MCF 10A (cell line): ENCODE measurements at regions of chrX and their contacts with region 1.

Region 1: GRCh38 chrX:63686878-63687714 is 97.9 kb downstream of the ARHGEF9 start:
- DNase-seq: peak; percentile 56
- H3K4me3 Mint-ChIP-seq: no peak overlapping the region
- H3K27ac Mint-ChIP-seq: no peak overlapping the region
- H3K4me1 Mint-ChIP-seq: no peaks in the 10 kb centered on the region
- H3K27me3 Mint-ChIP-seq: no peaks in the 10 kb centered on the region
- CTCF ChIP-seq: peak; percentile 80

Region 2: GRCh38 chrX:63350941-63351616 is 336.0 kb before region 1 on chrX and contains the start of gene SPIN4:
- CTCF ChIA-PET with region 1: no interaction called
- POLR2A ChIA-PET with region 1: no interaction called
- intact Hi-C with region 1: loop called (anchors 5 kb)
- DNase-seq: peak; percentile 78
- H3K4me3 Mint-ChIP-seq: peak within 1 kb of the TSS; percentile 86
- H3K27ac Mint-ChIP-seq: peak within 1 kb of the TSS; percentile 41
- H3K4me1 Mint-ChIP-seq: peaks cover 11% of the 10 kb centered on the region
- H3K27me3 Mint-ChIP-seq: no peaks in the 10 kb centered on the region
- CTCF ChIP-seq: no peak
- total RNA-seq, gene SPIN4: 4.6 and 6.9 TPM in 2 replicates

Region 3: GRCh38 chrX:63506320-63506719 is 180.8 kb before region 1 on chrX:
- CTCF ChIA-PET with region 1: interaction called, 3 read pairs
- POLR2A ChIA-PET with region 1: interaction called, 3 read pairs
- intact Hi-C with region 1: loop called (anchors 10 kb)
- DNase-seq: peak; percentile 44
- H3K4me3 Mint-ChIP-seq: no peak overlapping the region
- H3K27ac Mint-ChIP-seq: no peak overlapping the region
- H3K4me1 Mint-ChIP-seq: peaks cover 6% of the 10 kb centered on the region
- H3K27me3 Mint-ChIP-seq: no peaks in the 10 kb centered on the region
- CTCF ChIP-seq: peak; percentile 14

Region 4: GRCh38 chrX:63613531-63614028 is 73.5 kb before region 1 on chrX:
- CTCF ChIA-PET with region 1: no interaction called
- POLR2A ChIA-PET with region 1: no interaction called
- intact Hi-C with region 1: no loop called
- DNase-seq: no peak
- H3K4me3 Mint-ChIP-seq: no peak overlapping the region
- H3K27ac Mint-ChIP-seq: no peak overlapping the region
- H3K4me1 Mint-ChIP-seq: no peaks in the 10 kb centered on the region
- H3K27me3 Mint-ChIP-seq: no peaks in the 10 kb centered on the region
- CTCF ChIP-seq: no peak

Region 5: GRCh38 chrX:63664083-63664482 is 23.0 kb before region 1 on chrX:
- CTCF ChIA-PET with region 1: interaction called, 15 read pairs
- POLR2A ChIA-PET with region 1: no interaction called
- intact Hi-C with region 1: no loop called
- DNase-seq: no peak
- H3K4me3 Mint-ChIP-seq: no peak overlapping the region
- H3K27ac Mint-ChIP-seq: no peak overlapping the region
- H3K4me1 Mint-ChIP-seq: no peaks in the 10 kb centered on the region
- H3K27me3 Mint-ChIP-seq: no peaks in the 10 kb centered on the region
- CTCF ChIP-seq: no peak

Region 6: DNA sequence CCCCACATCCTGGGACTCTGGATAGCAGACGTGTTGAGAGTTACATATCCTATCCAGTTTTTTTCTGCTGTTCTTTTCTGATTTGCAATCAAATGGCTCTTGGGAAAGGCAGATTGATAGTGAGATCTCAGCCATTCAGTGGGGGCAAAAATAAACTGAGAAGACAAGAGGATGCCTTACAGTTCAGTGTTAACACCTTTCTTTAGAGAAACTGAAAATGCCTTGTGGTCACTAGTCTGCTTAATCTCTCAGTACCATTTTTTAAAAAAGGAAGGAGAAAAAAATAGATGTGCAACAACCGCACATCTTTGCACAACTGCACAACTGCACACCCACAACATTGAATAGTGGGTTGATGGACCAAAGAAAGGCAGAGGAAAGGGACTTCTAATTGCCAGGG is 11.4 kb before region 1 on chrX:
- CTCF ChIA-PET with region 1: interaction called, 21 read pairs
- POLR2A ChIA-PET with region 1: no interaction called
- intact Hi-C with region 1: no loop called
- DNase-seq: no peak
- H3K4me3 Mint-ChIP-seq: no peak overlapping the region
- H3K27ac Mint-ChIP-seq: no peak overlapping the region
- H3K4me1 Mint-ChIP-seq: no peaks in the 10 kb centered on the region
- H3K27me3 Mint-ChIP-seq: no peaks in the 10 kb centered on the region
- CTCF ChIP-seq: no peak

Region 7: DNA sequence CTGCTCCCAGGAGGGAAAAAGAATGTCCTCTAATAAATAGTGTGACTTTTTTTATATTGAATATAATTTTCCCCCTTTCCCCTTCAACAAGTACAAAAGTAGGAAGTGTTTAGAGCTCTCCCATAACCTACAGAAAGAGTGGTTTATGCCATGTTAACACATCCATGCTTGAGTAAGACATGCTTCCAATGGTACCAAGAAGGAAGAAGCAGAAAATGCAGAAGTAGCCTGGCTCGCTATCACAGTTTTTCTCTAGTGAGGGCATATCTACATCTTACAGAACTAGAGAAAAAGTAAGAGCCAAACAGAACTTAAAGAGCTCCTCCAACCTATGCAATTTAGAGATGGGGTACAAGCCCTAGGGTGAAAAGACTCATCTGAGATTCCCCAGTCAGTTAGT is 15.5 kb after region 1 on chrX:
- CTCF ChIA-PET with region 1: interaction called, 14 read pairs
- POLR2A ChIA-PET with region 1: no interaction called
- intact Hi-C with region 1: no loop called
- DNase-seq: no peak
- H3K4me3 Mint-ChIP-seq: no peak overlapping the region
- H3K27ac Mint-ChIP-seq: no peak overlapping the region
- H3K4me1 Mint-ChIP-seq: no peaks in the 10 kb centered on the region
- H3K27me3 Mint-ChIP-seq: no peaks in the 10 kb centered on the region
- CTCF ChIP-seq: no peak